ENCODE measurements at regions of chr20 and their contacts with region 1.

Region 1: DNA sequence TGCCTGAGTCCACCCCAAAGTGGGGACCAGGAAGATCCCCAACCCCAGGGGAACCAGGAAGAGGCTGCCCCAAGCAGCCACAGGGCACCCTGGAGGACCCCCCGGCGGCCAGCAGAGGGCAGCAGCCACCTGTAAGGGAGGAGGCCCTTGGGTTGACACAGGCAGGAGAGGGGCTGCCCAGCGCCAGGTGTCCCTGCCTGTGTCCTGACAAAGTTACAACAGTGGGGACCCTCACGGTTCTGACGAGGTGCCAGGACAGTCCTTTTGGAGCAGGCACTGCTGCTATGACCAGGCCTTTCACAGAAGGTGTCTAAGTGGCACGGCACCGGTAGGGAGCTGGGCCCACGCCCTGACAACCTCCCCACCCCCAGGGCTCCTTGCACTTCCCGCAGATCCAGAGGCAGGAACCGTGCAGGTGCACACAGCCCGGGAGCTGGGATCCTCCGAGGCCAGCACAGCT is 176.7 kb downstream of the BMP7 start:
- DNase-seq: peak; percentile 94
- ATAC-seq: peak; percentile 87
- H3K4me3 Mint-ChIP-seq: no peak overlapping the region
- H3K27ac Mint-ChIP-seq: no peak overlapping the region; the same call in 1 of the 2 replicates
- H3K4me1 Mint-ChIP-seq: peaks cover 7% of the 10 kb centered on the region
- H3K27me3 Mint-ChIP-seq: peaks cover 21% of the 10 kb centered on the region
- CTCF ChIP-seq: peak; percentile 88

Region 2: GRCh38 chr20:57053798-57054552 is 35.7 kb before region 1 on chr20:
- CTCF ChIA-PET with region 1: no interaction called
- POLR2A ChIA-PET with region 1: no interaction called
- DNase-seq: no peak
- ATAC-seq: no peak
- H3K4me3 Mint-ChIP-seq: no peak overlapping the region
- H3K27ac Mint-ChIP-seq: no peak overlapping the region
- H3K4me1 Mint-ChIP-seq: no peaks in the 10 kb centered on the region
- H3K27me3 Mint-ChIP-seq: no peaks in the 10 kb centered on the region
- CTCF ChIP-seq: no peak

Region 3: DNA sequence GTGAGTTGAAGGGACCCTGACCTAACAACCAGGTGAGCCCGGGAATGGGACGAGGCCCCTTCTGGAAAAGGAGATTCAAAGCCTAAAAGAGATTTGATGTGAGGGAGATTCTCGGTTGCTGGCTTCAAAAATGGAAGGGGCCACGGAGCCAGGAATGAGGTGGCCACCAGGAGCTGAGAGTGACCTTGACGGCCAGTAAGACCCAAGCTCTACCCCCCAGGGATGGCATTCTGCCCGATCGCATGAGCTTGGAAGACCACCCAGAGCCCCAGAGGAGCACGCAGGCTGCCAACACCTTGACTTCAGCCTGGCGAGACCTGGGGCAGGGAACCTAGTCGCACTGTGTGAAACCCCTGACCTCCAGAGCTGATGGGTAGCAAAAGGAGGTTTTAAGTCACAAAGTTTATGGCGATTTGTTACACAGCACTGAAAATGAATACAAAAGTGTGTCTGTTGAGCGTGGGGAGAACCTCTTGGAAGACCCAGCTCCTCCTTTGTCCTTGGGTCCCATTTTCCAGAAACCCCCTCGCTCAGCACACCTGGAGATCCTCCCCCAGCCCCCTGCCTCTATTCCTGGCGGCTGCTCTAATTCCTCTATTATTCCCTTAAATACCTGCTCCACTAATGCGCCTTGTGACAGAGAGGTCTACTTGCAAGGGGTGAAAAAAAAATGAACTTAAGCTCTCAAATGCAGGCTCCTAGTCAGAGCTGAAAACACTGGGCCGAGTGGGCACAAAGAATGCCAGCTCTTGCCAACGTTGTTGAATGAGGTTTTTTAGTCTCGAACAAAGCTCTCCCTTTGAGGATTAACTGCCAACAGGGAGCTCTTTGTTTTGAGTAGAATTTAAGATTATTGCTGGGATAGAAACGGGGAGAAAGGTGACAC is 13.1 kb after region 1 on chr20:
- CTCF ChIA-PET with region 1: interaction called, 14 read pairs
- POLR2A ChIA-PET with region 1: no interaction called
- DNase-seq: no peak
- ATAC-seq: no peak
- H3K4me3 Mint-ChIP-seq: no peak overlapping the region
- H3K27ac Mint-ChIP-seq: no peak overlapping the region
- H3K4me1 Mint-ChIP-seq: no peaks in the 10 kb centered on the region
- H3K27me3 Mint-ChIP-seq: no peaks in the 10 kb centered on the region; the same call in 1 of the 2 replicates
- CTCF ChIP-seq: no peak

Region 4: GRCh38 chr20:57108732-57109573 is 19.2 kb after region 1 on chr20:
- CTCF ChIA-PET with region 1: interaction called, 10 read pairs
- POLR2A ChIA-PET with region 1: no interaction called
- DNase-seq: no peak
- ATAC-seq: peak; percentile 85
- H3K4me3 Mint-ChIP-seq: no peak overlapping the region
- H3K27ac Mint-ChIP-seq: 0 out of 2 replicates have a peak overlapping the region, but pooled peaks have one; percentile 45
- H3K4me1 Mint-ChIP-seq: no peaks in the 10 kb centered on the region
- H3K27me3 Mint-ChIP-seq: no peaks in the 10 kb centered on the region
- CTCF ChIP-seq: no peak

Region 5: DNA sequence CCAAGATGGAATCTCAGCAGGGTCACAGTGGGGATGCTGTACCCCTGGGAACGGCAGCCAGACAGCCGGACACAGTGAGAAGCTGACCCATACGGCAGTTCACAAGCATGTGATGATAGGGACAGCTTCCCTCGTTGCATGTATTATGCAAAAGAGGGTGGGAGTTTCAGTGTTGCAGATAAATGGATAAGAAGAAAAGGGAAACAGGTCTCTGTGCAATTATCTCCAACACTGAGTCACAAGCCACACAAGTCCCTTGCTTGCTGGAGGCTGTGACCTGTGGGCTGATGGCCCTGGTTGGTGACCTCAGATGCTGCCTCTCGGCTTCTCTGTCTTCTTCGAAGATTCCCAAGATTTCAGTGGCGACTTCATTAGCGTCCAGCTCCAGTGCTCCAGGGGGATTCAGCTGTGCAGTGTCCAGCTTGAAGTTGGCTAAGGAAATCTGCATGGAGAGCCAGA is 219.1 kb after region 1 on chr20:
- CTCF ChIA-PET with region 1: no interaction called
- POLR2A ChIA-PET with region 1: no interaction called
- DNase-seq: no peak
- ATAC-seq: no peak
- H3K4me3 Mint-ChIP-seq: no peak overlapping the region
- H3K27ac Mint-ChIP-seq: no peak overlapping the region
- H3K4me1 Mint-ChIP-seq: no peaks in the 10 kb centered on the region
- H3K27me3 Mint-ChIP-seq: no peaks in the 10 kb centered on the region; the same call in 1 of the 2 replicates
- CTCF ChIP-seq: no peak

Region 6: DNA sequence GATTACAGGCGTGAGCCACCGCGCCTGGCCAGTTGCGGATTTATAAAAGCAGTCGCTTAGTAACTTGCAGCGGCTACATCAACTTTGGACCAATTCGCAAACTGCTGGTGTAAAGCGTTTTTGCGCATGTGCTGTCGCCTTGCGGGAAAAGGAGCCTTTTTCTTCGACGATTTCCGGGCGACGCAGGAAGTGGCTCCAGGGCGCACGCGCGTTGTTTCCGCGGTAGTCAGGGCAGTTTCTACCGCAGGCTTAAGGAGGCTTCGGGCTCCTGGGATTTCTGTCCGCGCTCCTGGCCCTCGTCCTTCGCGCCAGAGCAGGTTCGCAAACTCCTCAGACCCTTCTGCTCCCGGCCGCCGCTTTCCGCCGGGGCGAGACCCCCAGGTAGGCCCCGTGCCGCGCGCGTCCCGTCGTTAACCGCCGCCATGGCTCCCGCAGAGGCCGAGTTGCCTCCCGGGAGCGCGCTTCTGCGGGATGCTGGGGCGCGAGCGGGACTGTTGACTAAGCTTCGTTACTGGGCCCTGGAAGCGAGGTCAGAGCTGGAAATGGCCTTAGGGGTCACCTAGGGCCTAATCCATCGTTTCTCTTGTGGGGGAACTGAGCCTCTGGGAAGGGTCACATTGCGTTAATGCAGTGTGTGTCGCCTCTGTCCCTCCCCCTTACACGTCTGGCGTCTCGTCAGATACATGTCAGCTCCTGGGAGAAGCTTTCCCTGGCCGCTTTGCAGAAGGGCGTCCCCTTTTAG is 261.5 kb after region 1 on chr20 and contains the start of gene RAE1:
- CTCF ChIA-PET with region 1: interaction called, 26 read pairs
- POLR2A ChIA-PET with region 1: no interaction called
- DNase-seq: peak; percentile 81
- ATAC-seq: peak; percentile 84
- H3K4me3 Mint-ChIP-seq: peak within 1 kb of the TSS; percentile 87
- H3K27ac Mint-ChIP-seq: peak within 1 kb of the TSS; percentile 16; the same call in 1 of the 2 replicates
- H3K4me1 Mint-ChIP-seq: peaks cover 11% of the 10 kb centered on the region
- H3K27me3 Mint-ChIP-seq: peaks cover 6% of the 10 kb centered on the region
- CTCF ChIP-seq: no peak
- total RNA-seq, gene RAE1: 31.3 to 33.4 TPM (median 31.4 TPM) in 3 replicates